Activated CD4-positive, alpha-beta memory T cell treated with anti-CD3 and anti-CD28 coated beads for 36 hours (primary cell): ENCODE measurements at regions of chr12 and their contacts with region 1.

Region 1: GRCh38 chr12:56189176-56189917 is at the start of gene SMARCC2:
- DNase-seq: peak; percentile 92
- H3K4me3 Mint-ChIP-seq: peak within 1 kb of the TSS; percentile 87
- H3K27ac Mint-ChIP-seq: peak within 1 kb of the TSS; percentile 95
- H3K4me1 Mint-ChIP-seq: peaks cover 35% of the 10 kb centered on the region
- H3K27me3 Mint-ChIP-seq: no peaks in the 10 kb centered on the region
- total RNA-seq, gene SMARCC2: 96.4 to 103 TPM

Region 2: GRCh38 chr12:55862286-55862685 is 327.1 kb before region 1 on chr12:
- CTCF ChIA-PET with region 1: no interaction called
- POLR2A ChIA-PET with region 1: no interaction called
- intact Hi-C with region 1: no loop called
- DNase-seq: no peak
- H3K4me3 Mint-ChIP-seq: no peak overlapping the region
- H3K27ac Mint-ChIP-seq: no peak overlapping the region
- H3K4me1 Mint-ChIP-seq: no peaks in the 10 kb centered on the region
- H3K27me3 Mint-ChIP-seq: peaks cover 1% of the 10 kb centered on the region

Region 3: GRCh38 chr12:56041552-56042429 is 147.6 kb before region 1 on chr12 and contains the start of gene RPS26:
- CTCF ChIA-PET with region 1: interaction called, 6 read pairs
- POLR2A ChIA-PET with region 1: no interaction called
- intact Hi-C with region 1: loop called (anchors 2 kb)
- DNase-seq: peak; percentile 95
- H3K4me3 Mint-ChIP-seq: peak within 1 kb of the TSS; percentile 98
- H3K27ac Mint-ChIP-seq: peak within 1 kb of the TSS; percentile 98
- H3K4me1 Mint-ChIP-seq: peaks cover 47% of the 10 kb centered on the region
- H3K27me3 Mint-ChIP-seq: no peaks in the 10 kb centered on the region
- total RNA-seq, gene RPS26: 28.1 to 40.7 TPM

Region 4: GRCh38 chr12:56152318-56153033 is 36.9 kb before region 1 on chr12 and contains the start of gene MYL6B:
- CTCF ChIA-PET with region 1: interaction called, 9 read pairs
- POLR2A ChIA-PET with region 1: interaction called, 6 read pairs
- intact Hi-C with region 1: loop called (anchors 1 kb)
- DNase-seq: peak; percentile 97
- H3K4me3 Mint-ChIP-seq: peak within 1 kb of the TSS; percentile 78
- H3K27ac Mint-ChIP-seq: peak within 1 kb of the TSS; percentile 96
- H3K4me1 Mint-ChIP-seq: peaks cover 34% of the 10 kb centered on the region
- H3K27me3 Mint-ChIP-seq: no peaks in the 10 kb centered on the region
- total RNA-seq, gene MYL6B: 63.8 to 70.8 TPM

Region 5: GRCh38 chr12:56178347-56178746 is 11.0 kb before region 1 on chr12:
- CTCF ChIA-PET with region 1: interaction called, 14 read pairs
- POLR2A ChIA-PET with region 1: interaction called, 7 read pairs
- intact Hi-C with region 1: no loop called
- DNase-seq: no peak
- H3K4me3 Mint-ChIP-seq: no peak overlapping the region
- H3K27ac Mint-ChIP-seq: no peak overlapping the region
- H3K4me1 Mint-ChIP-seq: no peaks in the 10 kb centered on the region
- H3K27me3 Mint-ChIP-seq: no peaks in the 10 kb centered on the region

Region 6: GRCh38 chr12:56258057-56258819 is 68.9 kb after region 1 on chr12 and contains the start of gene ANKRD52:
- CTCF ChIA-PET with region 1: interaction called, 14 read pairs
- POLR2A ChIA-PET with region 1: interaction called, 5 read pairs
- intact Hi-C with region 1: loop called (anchors 1 kb)
- DNase-seq: peak; percentile 82
- H3K4me3 Mint-ChIP-seq: peak within 1 kb of the TSS; percentile 87
- H3K27ac Mint-ChIP-seq: peak within 1 kb of the TSS; percentile 81
- H3K4me1 Mint-ChIP-seq: peaks cover 19% of the 10 kb centered on the region
- H3K27me3 Mint-ChIP-seq: no peaks in the 10 kb centered on the region
- total RNA-seq, gene ANKRD52: 34.1 to 37.0 TPM

Region 7: DNA sequence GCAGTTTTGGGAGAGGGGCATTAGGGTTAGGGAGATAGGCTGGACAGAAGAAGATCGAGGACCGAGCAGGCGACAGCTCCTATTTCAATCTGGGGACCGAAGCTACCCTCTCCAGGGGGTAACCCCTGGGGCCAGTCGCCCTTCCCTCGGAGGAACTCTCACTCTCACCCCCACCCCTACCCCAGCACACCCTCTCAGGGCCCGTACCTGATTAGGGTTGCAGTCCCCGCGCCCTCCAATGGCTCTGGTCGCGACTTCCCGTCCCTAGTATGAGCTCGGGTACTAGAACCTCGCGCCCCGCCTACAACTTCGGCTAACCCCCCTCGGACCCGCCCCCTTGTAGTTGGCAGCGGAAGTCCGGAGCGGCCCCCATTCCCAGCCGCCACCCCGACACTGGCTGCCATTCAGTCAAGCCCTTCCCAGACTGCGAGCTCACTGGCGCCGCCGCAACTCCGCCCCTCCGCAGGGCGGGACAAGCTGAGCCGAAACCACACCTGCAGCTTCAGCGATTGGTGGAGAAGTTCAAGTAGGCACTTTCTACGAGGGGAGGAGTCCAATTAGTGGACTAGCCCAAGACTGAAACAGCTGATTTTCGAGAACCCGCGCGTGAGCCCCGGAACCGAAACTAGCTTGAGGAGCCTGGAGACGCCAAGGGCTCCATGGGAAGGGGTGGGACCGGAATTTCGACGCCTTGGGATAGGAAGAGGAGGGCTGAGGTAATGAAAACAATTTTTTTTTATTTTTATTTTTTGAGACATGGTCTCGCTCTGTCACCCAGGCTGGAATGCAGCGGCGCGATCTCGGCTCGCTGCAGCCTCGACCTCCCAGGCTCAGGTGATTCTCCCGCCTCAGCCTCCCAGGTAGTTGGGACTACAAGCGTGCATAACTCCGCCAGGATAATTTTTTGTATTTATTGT is 170.8 kb after region 1 on chr12 and contains the start of gene STAT2:
- CTCF ChIA-PET with region 1: interaction called, 10 read pairs
- POLR2A ChIA-PET with region 1: no interaction called
- intact Hi-C with region 1: no loop called
- DNase-seq: peak; percentile 100
- H3K4me3 Mint-ChIP-seq: peak within 1 kb of the TSS; percentile 89
- H3K27ac Mint-ChIP-seq: peak within 1 kb of the TSS; percentile 94
- H3K4me1 Mint-ChIP-seq: peaks cover 19% of the 10 kb centered on the region
- H3K27me3 Mint-ChIP-seq: no peaks in the 10 kb centered on the region
- total RNA-seq, gene STAT2: 125 to 139 TPM

Region 8: GRCh38 chr12:56601503-56601902 is 412.2 kb after region 1 on chr12:
- CTCF ChIA-PET with region 1: no interaction called
- POLR2A ChIA-PET with region 1: no interaction called
- intact Hi-C with region 1: no loop called
- DNase-seq: peak; percentile 47
- H3K4me3 Mint-ChIP-seq: no peak overlapping the region
- H3K27ac Mint-ChIP-seq: no peak overlapping the region
- H3K4me1 Mint-ChIP-seq: no peaks in the 10 kb centered on the region
- H3K27me3 Mint-ChIP-seq: no peaks in the 10 kb centered on the region